Common myeloid progenitor, CD34-positive (primary cell): ENCODE measurements at regions of chr19 and their contacts with region 1.

Region 1: GRCh38 chr19:6551607-6552450 is 21.0 kb downstream of the TNFSF9 start:
- DNase-seq: peak; percentile 64 to 86 (median 80)
- H3K4me3 ChIP-seq: peak overlapping the region in 2 of 7 experiments; percentile 36 to 57
- H3K27ac ChIP-seq: no peak overlapping the region
- H3K4me1 ChIP-seq: peaks cover 0 to 20% (median 15%) of the 10 kb centered on the region in 4 experiments
- H3K27me3 ChIP-seq: no peaks in the 10 kb centered on the region

Region 2: DNA sequence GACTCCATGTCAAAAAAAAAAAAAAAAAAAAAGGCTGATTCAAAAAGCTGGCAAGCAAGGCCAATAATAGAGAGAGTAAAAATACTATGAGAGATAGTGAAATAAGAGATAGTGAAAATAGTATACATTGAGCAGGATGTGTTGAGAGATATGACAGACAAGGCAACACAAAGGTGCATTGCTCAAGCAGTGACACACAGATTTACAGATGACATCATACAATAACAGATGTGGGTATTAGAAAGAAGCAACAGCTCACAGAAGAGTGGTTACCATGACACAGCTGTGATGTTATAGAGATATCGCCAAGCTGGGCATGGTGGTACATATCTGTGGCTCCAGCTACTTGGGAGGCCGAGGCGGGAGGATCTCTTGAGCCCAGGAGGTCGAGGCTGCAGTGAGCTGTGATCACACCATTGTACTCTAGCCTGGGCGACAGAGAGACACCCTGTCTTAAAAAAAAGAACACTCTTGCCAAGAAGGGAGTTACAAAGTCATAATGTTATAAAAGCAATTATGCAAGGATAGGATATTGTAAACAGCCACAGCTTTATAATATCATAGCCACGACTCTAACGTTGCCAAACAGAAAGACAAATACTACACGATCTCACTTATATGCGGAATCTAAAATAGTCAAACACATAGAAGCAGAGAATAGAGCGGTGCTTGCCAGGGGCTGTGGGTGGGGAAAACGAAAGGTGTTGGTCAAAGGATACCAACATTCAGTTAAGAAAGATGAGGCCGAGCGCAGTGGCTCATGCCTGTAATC is 10.7 kb before region 1 on chr19:
- CTCF ChIA-PET with region 1: interaction called, 21 read pairs
- POLR2A ChIA-PET with region 1: interaction called, 3 read pairs
- DNase-seq: no peak
- H3K4me3 ChIP-seq: no peak overlapping the region
- H3K27ac ChIP-seq: no peak overlapping the region
- H3K4me1 ChIP-seq: peaks cover 0 to 6% (median 4%) of the 10 kb centered on the region in 4 experiments
- H3K27me3 ChIP-seq: peaks cover 0 to 4% (median 0%) of the 10 kb centered on the region in 5 experiments

Region 3: DNA sequence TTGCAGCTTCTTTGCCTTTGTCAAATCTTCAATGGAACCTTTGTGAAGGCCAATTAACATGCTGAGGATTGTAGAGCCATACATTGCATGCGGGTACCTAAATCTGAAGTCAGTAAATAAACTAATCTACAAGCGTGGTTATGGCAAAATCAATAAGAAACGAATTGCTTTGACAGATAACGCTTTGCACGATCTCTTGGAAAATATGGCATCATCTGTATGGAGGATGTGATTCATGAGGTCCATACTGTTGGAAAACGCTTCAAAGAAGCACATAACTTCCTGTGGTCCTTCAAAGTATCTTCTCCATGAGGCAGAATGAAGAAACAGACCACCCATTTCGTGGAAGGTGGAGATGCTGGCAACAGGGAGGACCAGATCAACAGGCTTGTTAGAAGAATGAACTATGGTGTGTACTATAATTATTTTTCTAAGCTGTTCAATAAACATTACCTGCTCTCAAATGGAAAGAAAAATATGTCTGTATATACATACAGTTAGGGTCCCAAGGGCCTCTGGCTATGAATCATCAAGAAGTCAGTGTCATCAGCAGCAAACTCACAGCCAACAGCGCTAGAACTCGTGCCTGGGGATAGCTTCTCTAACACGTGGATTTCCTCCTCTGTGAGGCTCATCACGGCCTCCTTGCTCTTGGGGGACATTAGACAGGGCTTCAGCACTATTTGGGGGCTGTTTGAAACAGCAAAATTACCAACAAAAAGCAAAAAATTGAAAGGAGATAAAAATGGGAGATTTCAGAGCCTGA is 42.0 kb after region 1 on chr19:
- CTCF ChIA-PET with region 1: no interaction called
- POLR2A ChIA-PET with region 1: no interaction called
- DNase-seq: no peak
- H3K4me3 ChIP-seq: no peak overlapping the region
- H3K27ac ChIP-seq: no peak overlapping the region
- H3K4me1 ChIP-seq: peaks cover 0 to 22% (median 18%) of the 10 kb centered on the region in 4 experiments
- H3K27me3 ChIP-seq: peaks cover 1 to 60% (median 27%) of the 10 kb centered on the region in 5 experiments